Left ventricle myocardium superior (tissue), 1 donor: ENCODE measurements at regions of chr11 and their contacts with region 1.

Region 1: GRCh38 chr11:56841210-56841810 is 92.8 kb upstream of the OR9G4 start:
- DNase-seq: no peak
- ATAC-seq: peak; percentile 50

Region 2: GRCh38 chr11:57116654-57117053 is 275.3 kb after region 1 on chr11:
- intact Hi-C with region 1: loop called (anchors 10 kb)
- DNase-seq: no peak
- ATAC-seq: peak; percentile 52